IMR-90 (cell line): ENCODE measurements at regions of chr12 and their contacts with region 1.

Region 1: GRCh38 chr12:101876861-101877815 is at the start of gene DRAM1:
- DNase-seq: peak; percentile 89
- ATAC-seq: peak; percentile 95
- H3K4me3 ChIP-seq: peak within 1 kb of the TSS; percentile 99
- H3K27ac ChIP-seq: peak within 1 kb of the TSS; percentile 99
- H3K4me1 ChIP-seq: peaks cover 1% of the 10 kb centered on the region
- H3K27me3 ChIP-seq: no peaks in the 10 kb centered on the region
- CTCF ChIP-seq: 0 out of 2 replicates have a peak, but pooled peaks have one; percentile 6
- POLR2A ChIP-seq: peak; percentile 88
- RAD21 ChIP-seq: no peak
- total RNA-seq, gene DRAM1: 27.2 and 27.5 TPM in 2 replicates

Region 2: GRCh38 chr12:101862245-101862644 is 14.9 kb before region 1 on chr12:
- CTCF ChIA-PET with region 1: no interaction called
- POLR2A ChIA-PET with region 1: interaction called, 3 read pairs
- dilution Hi-C with region 1: no loop called
- in situ Hi-C with region 1: no loop called
- intact Hi-C with region 1: loop called (anchors 2 kb)
- DNase-seq: no peak
- ATAC-seq: peak; percentile 50
- H3K4me3 ChIP-seq: no peak overlapping the region
- H3K27ac ChIP-seq: no peak overlapping the region
- H3K4me1 ChIP-seq: 0 out of 2 replicates have a peak, but pooled peaks cover 2% of the 10 kb centered on the region
- H3K27me3 ChIP-seq: no peaks in the 10 kb centered on the region
- CTCF ChIP-seq: no peak
- POLR2A ChIP-seq: no peak
- RAD21 ChIP-seq: no peak